CD4-positive, alpha-beta memory T cell (primary cell): ENCODE measurements at regions of chr12 and their contacts with region 1.

Region 1: DNA sequence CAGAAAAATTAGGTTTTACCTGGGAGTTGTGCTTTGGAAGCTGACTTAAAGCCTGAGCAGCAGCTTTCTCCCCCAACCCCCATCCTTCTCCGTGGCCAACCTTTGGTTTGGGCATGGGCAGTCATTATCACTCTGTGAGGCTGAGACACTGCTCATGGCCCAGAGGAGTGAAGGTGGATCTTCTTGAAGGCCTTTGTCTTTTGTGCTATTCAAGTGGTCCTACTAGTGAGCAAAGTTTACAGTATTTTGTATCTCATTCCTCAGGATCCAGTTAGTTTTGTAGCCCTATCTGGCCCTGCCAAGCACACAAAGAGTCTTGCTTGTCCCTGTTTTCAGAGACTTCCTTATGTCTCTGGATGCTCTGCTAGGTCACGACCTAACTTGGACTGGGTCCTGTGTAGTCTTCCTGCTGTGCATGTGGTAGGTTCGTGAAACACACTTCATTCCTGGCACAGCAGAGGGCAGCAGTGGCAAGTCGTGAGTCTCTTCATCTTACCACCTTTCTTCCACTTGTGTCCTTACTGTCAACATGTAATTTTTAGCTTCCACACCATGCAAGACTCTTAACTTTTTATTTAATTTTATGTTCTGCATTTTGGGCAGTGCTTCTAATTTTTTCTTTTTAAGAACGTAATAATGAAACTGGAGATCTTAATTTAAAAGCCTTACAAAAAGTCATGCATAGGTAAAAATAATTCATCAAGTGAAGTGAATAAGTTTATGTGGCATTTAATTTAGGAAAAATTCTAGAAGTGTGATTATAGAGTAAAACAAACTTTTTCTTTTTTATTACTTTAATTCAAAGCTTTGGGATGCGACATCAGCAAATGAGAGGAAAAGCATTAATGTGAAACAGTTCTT is 53.7 kb downstream of the APAF1 start:
- DNase-seq: peak in 3 of 5 donors; percentile 21 to 26 (median 26)
- H3K4me3 ChIP-seq: no peak overlapping the region
- H3K4me3 Mint-ChIP-seq: no peak overlapping the region
- H3K27ac ChIP-seq: no peak overlapping the region
- H3K27ac Mint-ChIP-seq: peak overlapping the region in 4 of 7 donors; percentile 17 to 89 (median 60)
- H3K4me1 ChIP-seq: no peaks in the 10 kb centered on the region
- H3K4me1 Mint-ChIP-seq: peaks cover 12 to 21% (median 16%) of the 10 kb centered on the region in 4 donors
- H3K27me3 ChIP-seq: no peaks in the 10 kb centered on the region
- H3K27me3 Mint-ChIP-seq: no peaks in the 10 kb centered on the region

Region 2: DNA sequence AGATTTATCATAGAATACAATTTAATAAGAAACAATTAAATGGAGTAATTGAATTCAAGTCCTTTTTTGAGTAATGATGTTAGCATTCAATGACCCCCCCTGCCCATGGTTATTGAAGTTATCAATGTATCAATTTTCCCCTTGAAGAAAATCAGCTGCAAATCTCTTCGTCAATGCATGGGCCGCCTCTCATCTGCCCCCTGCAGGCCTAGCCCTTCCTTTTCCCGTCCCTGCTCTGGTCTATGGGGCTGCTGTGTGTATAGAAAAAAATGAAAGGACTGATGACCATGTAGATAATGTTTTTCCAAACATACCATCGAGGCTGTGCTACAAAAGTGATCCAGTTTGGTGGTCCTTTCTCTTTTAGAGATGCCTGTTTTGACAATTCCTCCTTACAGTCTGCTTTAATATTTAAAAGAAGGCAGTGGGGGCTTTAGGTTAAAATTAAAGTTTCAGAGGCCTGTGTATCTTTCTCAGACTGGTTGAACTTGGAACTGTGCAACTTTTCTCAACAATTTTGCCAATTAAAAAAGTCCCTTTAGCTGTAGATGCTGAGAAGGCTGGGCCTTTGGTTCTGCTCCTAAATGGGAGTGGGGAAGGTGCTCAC is 44.6 kb after region 1 on chr12:
- CTCF ChIA-PET with region 1: no interaction called
- POLR2A ChIA-PET with region 1: no interaction called
- intact Hi-C with region 1: loop called (anchors 1 kb)
- DNase-seq: peak in 3 of 5 donors; percentile 5 to 24 (median 19)
- H3K4me3 ChIP-seq: no peak overlapping the region
- H3K4me3 Mint-ChIP-seq: no peak overlapping the region
- H3K27ac ChIP-seq: no peak overlapping the region
- H3K27ac Mint-ChIP-seq: peak overlapping the region in 1 of 7 donors; percentile 50
- H3K4me1 ChIP-seq: peaks cover 20% of the 10 kb centered on the region
- H3K4me1 Mint-ChIP-seq: peaks cover 6 to 14% (median 10%) of the 10 kb centered on the region in 4 donors
- H3K27me3 ChIP-seq: no peaks in the 10 kb centered on the region
- H3K27me3 Mint-ChIP-seq: peaks cover 11 to 20% of the 10 kb centered on the region in 2 donors

Region 3: DNA sequence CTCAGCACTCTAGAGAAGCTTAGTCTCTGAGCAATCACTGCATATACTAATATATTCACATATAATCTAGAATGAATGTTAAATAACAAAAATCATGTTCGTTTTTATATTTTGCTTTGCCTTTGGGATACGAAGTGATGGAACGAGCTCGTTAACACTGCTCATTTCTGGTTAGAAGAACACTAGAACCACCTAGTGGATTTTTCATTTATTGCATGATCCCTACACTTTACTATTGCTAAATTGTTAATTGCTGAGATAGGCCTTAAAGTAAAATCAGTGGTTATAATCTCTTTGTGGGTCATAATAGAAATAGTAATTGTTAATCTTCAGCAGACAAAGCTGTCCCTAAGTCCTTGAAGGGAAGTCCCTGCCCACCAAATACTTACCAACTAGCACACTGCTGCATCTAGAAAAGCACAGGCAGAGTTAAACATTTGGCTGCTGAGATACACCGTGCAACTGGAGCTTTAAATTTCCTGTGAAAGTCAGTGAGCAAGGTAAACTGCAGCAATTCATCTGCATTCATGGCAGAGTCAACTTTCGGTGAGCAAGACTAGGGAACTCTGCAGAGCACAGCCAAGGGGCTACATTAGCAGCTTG is 300.0 kb after region 1 on chr12:
- CTCF ChIA-PET with region 1: no interaction called
- POLR2A ChIA-PET with region 1: no interaction called
- intact Hi-C with region 1: loop called (anchors 1 kb)
- DNase-seq: peak in 2 of 5 donors; percentile 10 to 16
- H3K4me3 ChIP-seq: no peak overlapping the region
- H3K4me3 Mint-ChIP-seq: no peak overlapping the region
- H3K27ac ChIP-seq: no peak overlapping the region
- H3K27ac Mint-ChIP-seq: no peak overlapping the region
- H3K4me1 ChIP-seq: no peaks in the 10 kb centered on the region
- H3K4me1 Mint-ChIP-seq: peaks cover 0 to 1% (median under 1%) of the 10 kb centered on the region in 4 donors
- H3K27me3 ChIP-seq: no peaks in the 10 kb centered on the region
- H3K27me3 Mint-ChIP-seq: peaks cover 3 to 4% of the 10 kb centered on the region in 2 donors